Common myeloid progenitor, CD34-positive (primary cell): ENCODE measurements at regions of chr5 and their contacts with region 1.

Region 1: GRCh38 chr5:178461004-178461730 is 129.0 kb downstream of the COL23A1 start:
- DNase-seq: peak in 2 of 3 donors; percentile 33 to 41
- H3K4me3 ChIP-seq: no peak overlapping the region
- H3K27ac ChIP-seq: no peak overlapping the region
- H3K4me1 ChIP-seq: peaks cover 0 to 2% (median 0%) of the 10 kb centered on the region in 4 experiments
- H3K27me3 ChIP-seq: no peaks in the 10 kb centered on the region

Region 2: GRCh38 chr5:178259623-178260536 is 201.3 kb before region 1 on chr5:
- CTCF ChIA-PET with region 1: no interaction called
- POLR2A ChIA-PET with region 1: no interaction called
- DNase-seq: no peak
- H3K4me3 ChIP-seq: no peak overlapping the region
- H3K27ac ChIP-seq: no peak overlapping the region
- H3K4me1 ChIP-seq: peaks cover 0 to 7% (median under 1%) of the 10 kb centered on the region in 4 experiments
- H3K27me3 ChIP-seq: no peaks in the 10 kb centered on the region

Region 3: GRCh38 chr5:178449163-178450070 is 11.8 kb before region 1 on chr5:
- CTCF ChIA-PET with region 1: interaction called, 11 read pairs
- POLR2A ChIA-PET with region 1: no interaction called
- DNase-seq: peak in 2 of 3 donors; percentile 38 to 63
- H3K4me3 ChIP-seq: peak overlapping the region in 1 of 7 experiments; percentile 24
- H3K27ac ChIP-seq: peak overlapping the region in 1 of 2 experiments; percentile 61
- H3K4me1 ChIP-seq: peaks cover 0 to 3% (median 1%) of the 10 kb centered on the region in 4 experiments
- H3K27me3 ChIP-seq: peaks cover 0 to 28% (median 10%) of the 10 kb centered on the region in 5 experiments

Region 4: DNA sequence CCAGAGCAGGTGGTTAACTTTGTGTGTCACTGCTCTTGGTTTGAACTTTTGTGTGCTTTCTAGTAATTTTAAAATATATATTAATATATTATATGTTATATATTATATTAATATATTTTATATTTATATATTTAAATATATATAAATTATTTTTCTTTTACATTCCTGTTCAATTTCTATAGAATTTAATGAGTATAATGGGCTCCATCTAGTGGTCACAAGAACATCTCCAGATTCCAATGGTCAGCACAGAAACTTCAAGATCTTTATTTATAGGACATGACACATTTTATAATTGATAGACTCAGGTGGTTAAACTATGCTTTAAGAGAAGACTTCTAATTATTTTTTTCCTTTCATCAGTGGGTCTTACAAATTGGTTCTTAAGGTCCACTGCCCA is 89.9 kb after region 1 on chr5:
- CTCF ChIA-PET with region 1: interaction called, 23 read pairs
- POLR2A ChIA-PET with region 1: no interaction called
- DNase-seq: peak; percentile 19 to 38 (median 37)
- H3K4me3 ChIP-seq: no peak overlapping the region
- H3K27ac ChIP-seq: no peak overlapping the region
- H3K4me1 ChIP-seq: no peaks in the 10 kb centered on the region
- H3K27me3 ChIP-seq: peaks cover 0 to 1% (median 0%) of the 10 kb centered on the region in 5 experiments

Region 5: DNA sequence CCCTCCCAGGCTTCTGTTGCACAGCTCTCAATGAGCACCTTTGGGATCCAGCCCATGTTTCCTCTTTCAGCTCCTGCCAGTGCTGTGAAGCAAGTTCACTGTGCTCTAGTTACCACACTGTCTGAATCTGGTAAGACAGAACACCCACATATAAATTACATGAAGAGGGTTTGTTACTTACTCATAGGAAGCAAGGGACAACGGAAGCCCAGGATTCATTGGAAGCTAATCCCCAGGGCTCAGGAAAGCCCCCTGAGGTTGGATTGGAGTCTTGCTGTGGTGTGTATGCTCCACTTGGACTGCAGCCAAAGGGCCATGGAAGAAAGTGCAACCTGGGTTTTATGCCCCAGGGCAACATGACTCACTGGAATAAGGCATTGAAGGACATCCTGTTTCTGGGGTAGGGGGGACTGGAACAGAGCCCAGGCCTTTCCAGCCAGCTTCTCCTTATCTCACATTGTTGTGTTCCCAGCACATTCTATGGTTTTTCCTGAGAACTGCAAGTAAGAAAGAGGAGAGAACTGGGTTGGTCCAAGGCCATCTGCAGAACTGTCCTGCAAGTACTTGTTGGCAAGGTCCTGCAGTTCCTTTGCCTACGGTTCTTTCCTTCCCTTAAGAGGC is 181.3 kb after region 1 on chr5:
- CTCF ChIA-PET with region 1: no interaction called
- POLR2A ChIA-PET with region 1: no interaction called
- DNase-seq: no peak
- H3K4me3 ChIP-seq: no peak overlapping the region
- H3K27ac ChIP-seq: no peak overlapping the region
- H3K4me1 ChIP-seq: peaks cover 0 to 3% (median 2%) of the 10 kb centered on the region in 4 experiments
- H3K27me3 ChIP-seq: no peaks in the 10 kb centered on the region